ENCODE measurements at regions of chr5 and their contacts with region 1.

Region 1: DNA sequence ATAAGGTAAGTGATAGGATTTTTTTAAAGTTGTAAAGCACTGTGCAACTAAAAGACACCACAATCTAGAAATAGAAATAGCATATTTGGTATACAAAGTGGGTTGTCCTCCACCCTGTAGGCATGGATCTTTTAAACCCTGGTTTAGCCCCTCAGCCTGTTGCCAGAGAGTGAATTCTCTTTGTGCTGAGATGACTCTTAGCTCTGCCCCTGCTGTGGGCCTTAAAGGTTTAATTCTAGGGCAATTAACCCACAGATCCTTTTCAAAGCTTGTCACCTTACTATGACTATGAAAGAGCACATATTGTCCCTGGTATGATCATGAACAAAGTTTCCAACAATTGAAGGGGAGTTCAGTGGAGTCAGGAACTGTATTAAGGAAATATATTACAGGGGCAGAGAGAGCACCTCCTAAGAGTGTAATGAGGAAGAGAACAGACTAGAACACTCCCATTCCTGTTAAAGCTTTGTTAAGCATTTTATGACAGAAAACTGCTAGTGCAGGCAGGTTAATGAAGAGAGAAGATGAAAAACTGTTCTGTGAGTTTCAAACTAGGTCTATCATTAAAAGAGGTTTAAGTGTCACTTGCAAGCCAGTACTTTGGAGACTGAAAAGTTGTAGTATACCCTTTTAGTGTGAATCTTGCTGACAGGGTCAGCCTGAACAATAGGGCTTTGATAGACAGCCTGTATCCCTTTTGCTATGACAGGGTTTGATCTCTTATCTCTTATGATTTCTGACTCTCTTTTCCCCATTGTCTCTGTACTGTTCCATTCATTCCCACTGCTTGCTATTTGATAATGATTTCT is 104.1 kb upstream of the ELL2 start:
- DNase-seq: no peak
- ATAC-seq: peak; percentile 59
- H3K4me3 ChIP-seq: no peak overlapping the region
- H3K27ac ChIP-seq: no peak overlapping the region
- H3K4me1 ChIP-seq: peaks cover 5% of the 10 kb centered on the region
- H3K27me3 ChIP-seq: no peaks in the 10 kb centered on the region
- CTCF ChIP-seq: no peak
- EP300 ChIP-seq: no peak
- POLR2A ChIP-seq: no peak
- RAD21 ChIP-seq: no peak

Region 2: DNA sequence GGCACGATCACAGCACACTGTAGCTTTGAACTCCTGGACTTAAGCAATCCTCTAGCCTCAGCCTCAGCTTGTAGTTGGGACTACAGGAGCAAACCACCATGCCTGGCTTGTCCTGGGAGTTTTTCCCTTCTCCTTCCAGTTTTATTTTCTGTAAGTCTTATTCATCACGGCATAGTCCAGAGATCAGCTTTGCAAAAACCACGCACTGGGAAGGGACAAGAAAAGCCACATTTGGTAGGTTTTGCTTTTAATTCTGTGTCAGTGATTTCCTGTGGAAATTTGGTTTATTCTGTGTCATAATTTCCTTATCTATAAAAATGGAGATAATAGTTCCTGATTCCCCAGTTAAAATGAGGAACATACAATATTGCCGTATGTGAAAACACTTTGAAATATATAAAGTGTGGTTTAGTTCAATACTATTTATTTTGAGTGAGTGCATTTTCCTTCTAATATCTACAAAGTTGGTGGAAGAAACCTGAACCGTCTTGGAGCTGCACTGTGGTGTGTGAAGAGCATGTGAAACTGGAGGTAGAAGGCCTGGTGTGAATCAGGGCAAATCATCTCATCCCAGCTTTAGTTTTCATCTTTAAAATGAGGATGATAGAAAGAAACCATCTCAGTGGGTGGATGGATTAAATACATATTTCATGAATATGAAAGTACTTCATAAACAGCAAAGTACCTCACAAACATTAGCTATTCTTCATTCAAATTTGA is 11.3 kb before region 1 on chr5:
- CTCF ChIA-PET with region 1: interaction called, 5 read pairs
- POLR2A ChIA-PET with region 1: interaction called, 4 read pairs
- RAD21 ChIA-PET with region 1: no interaction called
- SMC1A ChIA-PET with region 1: interaction called, 17 read pairs
- in situ Hi-C with region 1: no loop called
- intact Hi-C with region 1: no loop called
- DNase-seq: no peak
- ATAC-seq: no peak
- H3K4me3 ChIP-seq: no peak overlapping the region
- H3K27ac ChIP-seq: no peak overlapping the region
- H3K4me1 ChIP-seq: no peaks in the 10 kb centered on the region
- H3K27me3 ChIP-seq: no peaks in the 10 kb centered on the region
- CTCF ChIP-seq: no peak
- EP300 ChIP-seq: no peak
- POLR2A ChIP-seq: no peak
- RAD21 ChIP-seq: no peak

Region 3: DNA sequence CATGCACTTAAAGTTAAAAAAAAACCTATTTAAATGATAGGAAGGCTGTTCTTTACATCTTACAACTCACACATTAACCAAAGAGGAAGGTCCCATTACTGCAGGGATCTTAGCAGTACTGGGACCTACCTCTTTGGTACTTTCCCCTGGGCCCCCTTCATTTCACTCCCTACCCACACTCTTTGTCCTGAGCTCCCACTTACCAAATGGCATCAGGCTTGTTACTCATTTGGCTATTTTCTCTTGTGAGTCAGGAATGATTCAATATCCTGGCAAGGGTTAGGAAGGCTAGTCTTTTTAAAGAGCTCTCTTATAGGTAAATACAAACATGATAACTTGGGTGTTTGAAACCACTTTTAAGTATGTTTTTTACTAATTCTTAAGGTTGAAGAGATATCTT is 13.3 kb after region 1 on chr5:
- CTCF ChIA-PET with region 1: interaction called, 3 read pairs
- POLR2A ChIA-PET with region 1: no interaction called
- RAD21 ChIA-PET with region 1: no interaction called
- SMC1A ChIA-PET with region 1: interaction called, 15 read pairs
- in situ Hi-C with region 1: no loop called
- intact Hi-C with region 1: no loop called
- DNase-seq: no peak
- ATAC-seq: peak; percentile 53
- H3K4me3 ChIP-seq: no peak overlapping the region
- H3K27ac ChIP-seq: no peak overlapping the region
- H3K4me1 ChIP-seq: no peaks in the 10 kb centered on the region
- H3K27me3 ChIP-seq: no peaks in the 10 kb centered on the region
- CTCF ChIP-seq: no peak
- EP300 ChIP-seq: no peak
- POLR2A ChIP-seq: no peak
- RAD21 ChIP-seq: no peak